H1 (cell line): ENCODE measurements at regions of chr1 and their contacts with region 1.

Region 1: DNA sequence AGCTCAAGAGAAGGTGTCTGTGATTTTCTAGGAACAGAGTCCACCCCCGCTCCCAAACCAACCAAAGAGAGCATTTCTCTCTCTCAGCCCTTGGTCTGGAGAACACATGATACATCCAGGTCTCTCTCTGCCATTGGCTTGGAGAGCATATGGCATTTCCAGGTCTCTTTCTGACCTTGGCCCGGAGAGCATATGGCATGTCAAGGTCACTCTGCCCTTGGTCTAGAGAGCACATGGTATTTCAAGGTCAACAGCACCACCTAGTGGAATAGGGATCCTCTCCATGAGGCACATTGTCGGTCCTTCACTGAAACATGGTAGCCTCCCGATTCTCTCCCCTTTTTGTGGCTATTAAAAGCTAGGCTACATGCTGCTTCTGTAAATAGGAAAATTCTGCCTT is 437.7 kb upstream of the OLFM3 start:
- DNase-seq: peak; percentile 1 to 58
- H3K4me3 ChIP-seq: no peak overlapping the region
- H3K27ac ChIP-seq: no peak overlapping the region
- H3K4me1 ChIP-seq: no peaks in the 10 kb centered on the region
- H3K27me3 ChIP-seq: no peaks in the 10 kb centered on the region
- CTCF ChIP-seq: peak; percentile 14 to 71 (median 47)
- EP300 ChIP-seq: no peak
- POLR2A ChIP-seq: no peak
- RAD21 ChIP-seq: peak; percentile 82 to 84

Region 2: DNA sequence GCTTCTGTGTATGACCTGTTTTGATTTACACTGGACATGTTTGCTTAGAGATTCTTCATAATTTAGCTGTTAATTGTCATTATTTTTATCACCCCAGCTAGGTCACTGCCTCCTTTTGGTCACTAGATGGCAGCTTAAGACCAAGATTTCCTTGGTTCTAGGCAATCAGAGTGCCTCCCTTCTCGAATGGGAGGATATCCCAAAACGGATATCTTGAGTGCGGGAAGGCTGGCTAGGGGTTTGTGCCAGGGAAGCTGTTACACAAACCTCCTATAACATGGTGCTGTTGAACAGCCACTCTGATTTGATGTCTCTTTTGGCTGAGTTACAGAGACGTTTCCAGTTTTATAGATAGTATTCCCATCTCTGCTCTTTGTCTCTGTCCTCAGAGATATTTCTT is 914.1 kb before region 1 on chr1:
- CTCF ChIA-PET with region 1: interaction called, 14 read pairs
- POLR2A ChIA-PET with region 1: no interaction called
- DNase-seq: peak; percentile 15 to 45
- H3K4me3 ChIP-seq: no peak overlapping the region
- H3K27ac ChIP-seq: no peak overlapping the region
- H3K4me1 ChIP-seq: no peaks in the 10 kb centered on the region
- H3K27me3 ChIP-seq: peaks cover 0 to 1% (median 0%) of the 10 kb centered on the region in 4 experiments; a peak in 1 of 7 replicates
- CTCF ChIP-seq: peak in 2 of 3 experiments; percentile 67 to 82; a peak in 3 of 4 replicates
- EP300 ChIP-seq: no peak
- POLR2A ChIP-seq: no peak
- RAD21 ChIP-seq: peak; percentile 90 to 91

Region 3: DNA sequence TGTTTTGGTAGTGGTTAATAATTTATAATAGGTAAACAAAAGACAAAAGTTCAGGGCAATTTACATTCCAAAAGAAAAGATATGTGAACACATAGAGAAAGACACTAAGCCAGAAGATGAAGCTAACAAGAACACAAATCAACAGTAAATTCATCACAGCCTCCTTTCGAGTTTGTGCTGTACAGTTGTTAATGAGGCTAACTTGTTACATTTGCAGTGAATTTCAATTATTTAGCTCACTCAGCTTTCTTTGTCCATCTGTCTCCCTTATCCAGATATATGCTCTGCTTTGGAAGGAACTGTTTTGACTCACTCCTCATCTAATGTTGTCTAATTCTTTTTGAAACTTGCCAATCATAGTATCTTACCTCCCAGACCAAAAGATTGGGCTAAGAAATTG is 14.4 kb before region 1 on chr1:
- CTCF ChIA-PET with region 1: interaction called, 13 read pairs
- POLR2A ChIA-PET with region 1: no interaction called
- DNase-seq: no peak
- H3K4me3 ChIP-seq: no peak overlapping the region
- H3K27ac ChIP-seq: no peak overlapping the region
- H3K4me1 ChIP-seq: no peaks in the 10 kb centered on the region
- H3K27me3 ChIP-seq: no peaks in the 10 kb centered on the region
- CTCF ChIP-seq: no peak
- EP300 ChIP-seq: no peak
- POLR2A ChIP-seq: no peak
- RAD21 ChIP-seq: no peak

Region 4: GRCh38 chr1:102732927-102733326 is 298.5 kb after region 1 on chr1:
- CTCF ChIA-PET with region 1: no interaction called
- POLR2A ChIA-PET with region 1: no interaction called
- DNase-seq: no peak
- H3K4me3 ChIP-seq: no peak overlapping the region
- H3K27ac ChIP-seq: no peak overlapping the region
- H3K4me1 ChIP-seq: no peaks in the 10 kb centered on the region
- H3K27me3 ChIP-seq: no peaks in the 10 kb centered on the region
- CTCF ChIP-seq: no peak
- EP300 ChIP-seq: no peak
- POLR2A ChIP-seq: no peak
- RAD21 ChIP-seq: no peak